Right ventricle myocardium superior (tissue), 1 donor: ENCODE measurements at regions of chr19 and their contacts with region 1.

Region 1: DNA sequence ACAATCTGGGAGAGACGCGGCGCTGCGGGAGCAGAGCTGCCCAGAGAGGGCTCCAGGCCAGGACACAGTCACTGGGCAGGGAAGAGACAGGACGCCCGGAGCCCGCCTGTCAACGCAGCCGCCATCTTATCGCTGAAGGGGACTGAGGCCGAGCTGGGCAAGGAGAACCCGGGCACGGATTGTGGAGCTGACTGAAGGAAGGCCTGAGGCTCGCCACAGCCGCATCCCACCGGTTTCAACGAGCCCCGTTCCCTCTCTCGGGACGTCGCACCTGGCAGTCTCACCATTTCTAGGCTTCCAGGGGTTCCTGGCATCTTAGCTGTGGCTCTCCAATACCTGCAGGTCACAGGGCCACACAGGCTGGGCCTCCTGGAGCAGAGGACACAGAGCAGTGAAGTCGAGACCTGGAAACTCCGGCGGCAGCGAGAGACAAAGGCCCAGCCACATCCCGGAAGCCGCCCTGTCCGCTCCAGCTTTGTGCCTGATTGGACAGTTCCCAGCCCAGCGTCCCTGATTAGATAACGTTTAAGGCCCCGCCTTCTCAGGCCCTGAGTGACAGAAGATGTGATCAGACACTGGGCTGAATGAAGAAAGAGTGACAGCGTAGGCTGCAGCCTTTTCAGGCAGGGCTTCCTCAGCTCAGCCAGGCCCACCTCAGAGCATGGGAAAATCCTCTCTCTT is at the start of gene ZNF91:
- DNase-seq: peak; percentile 97
- ATAC-seq: peak; percentile 96
- total RNA-seq, gene ZNF91: 90.6 TPM

Region 2: DNA sequence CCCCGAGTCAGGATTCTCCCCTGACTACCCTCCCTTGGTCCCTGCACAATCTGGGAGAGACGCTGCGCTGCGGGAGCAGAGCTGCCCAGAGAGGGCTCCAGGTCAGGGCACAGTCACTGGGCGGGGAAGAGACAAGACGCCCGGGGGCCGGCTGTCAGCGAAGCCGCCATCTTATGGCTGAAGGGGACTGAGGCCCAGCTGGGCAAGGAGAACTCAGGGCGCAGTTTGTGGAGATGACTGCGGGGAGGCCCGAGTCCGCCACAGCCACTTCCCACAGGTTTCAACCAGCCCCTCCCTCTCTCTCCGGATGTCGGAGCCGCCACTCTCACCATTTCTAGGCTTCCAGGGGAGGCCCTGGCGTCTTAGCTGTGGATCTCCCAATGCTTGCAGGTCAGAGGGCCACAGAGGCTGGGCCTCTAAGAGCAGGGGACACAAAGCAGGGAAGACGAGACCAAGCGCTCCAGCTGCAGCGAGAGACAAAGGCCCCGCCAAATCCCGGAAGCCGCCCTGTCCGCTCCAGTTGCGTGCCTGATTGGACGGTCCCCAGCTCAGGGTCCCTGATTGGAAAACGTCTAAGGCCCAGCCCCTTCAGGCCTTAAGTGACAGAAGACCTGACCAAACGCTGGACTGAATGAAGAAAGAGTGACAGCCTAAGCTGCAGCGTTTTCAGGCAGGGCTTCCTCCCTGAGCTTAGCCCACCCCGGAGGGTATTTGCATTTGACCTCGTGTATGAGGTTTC is 145.1 kb before region 1 on chr19 and contains the start of gene ZNF724:
- intact Hi-C with region 1: loop called (anchors 10 kb)
- DNase-seq: peak; percentile 94
- ATAC-seq: peak; percentile 100
- total RNA-seq, gene ZNF724: 1.3 TPM